Common myeloid progenitor, CD34-positive (primary cell): ENCODE measurements at regions of chr9 and their contacts with region 1.

Region 1: DNA sequence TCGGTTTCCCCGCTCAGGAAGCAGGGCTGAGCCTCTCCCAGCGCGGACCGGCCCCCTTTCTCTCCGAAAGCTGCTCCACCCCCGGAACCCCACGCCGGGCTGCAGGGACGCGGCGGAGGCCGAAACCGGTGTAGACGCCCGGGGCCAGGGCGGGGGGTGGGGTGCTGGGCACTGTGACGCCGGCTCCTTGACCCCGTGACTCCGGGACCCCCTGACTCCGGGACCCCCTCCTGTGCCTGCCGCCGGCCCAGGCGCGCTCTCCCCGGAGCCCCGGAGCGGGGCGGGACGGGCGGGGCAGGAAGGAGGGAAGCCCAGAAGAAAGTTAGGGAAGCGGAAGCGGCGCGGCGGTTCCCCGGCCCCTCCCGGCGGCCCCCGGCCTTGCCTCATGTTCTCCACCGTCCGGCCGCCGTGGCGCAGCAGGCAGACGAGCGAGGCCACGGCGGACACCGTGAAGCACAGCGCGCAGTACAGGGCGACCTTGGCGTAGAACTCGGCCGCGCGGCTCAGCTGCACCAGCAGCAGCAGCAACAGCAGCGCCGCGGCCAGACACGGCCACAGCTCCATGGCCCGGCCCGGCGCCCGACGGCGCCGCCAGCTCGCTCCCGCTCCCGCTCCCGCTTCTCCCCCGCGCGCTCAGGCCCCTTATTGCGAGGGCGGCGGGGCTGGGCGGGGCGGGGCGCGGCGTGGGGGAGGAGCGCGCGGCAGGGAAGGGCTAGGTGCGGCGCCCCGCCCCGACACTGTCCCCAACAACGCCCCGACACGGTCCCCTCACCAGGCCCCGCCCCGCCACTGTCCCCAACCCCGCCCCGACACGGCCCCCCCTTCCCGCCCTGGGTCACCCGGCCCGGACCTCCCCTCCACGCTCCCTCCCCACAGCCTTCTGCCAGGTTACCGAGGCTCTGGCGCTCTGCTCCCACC is at the start of gene AGPAT2:
- DNase-seq: peak; percentile 65 to 76 (median 73)
- H3K4me3 ChIP-seq: peak within 1 kb of the TSS; percentile 48 to 85 (median 78)
- H3K27ac ChIP-seq: peak within 1 kb of the TSS in 1 of 2 experiments; percentile 71
- H3K4me1 ChIP-seq: peaks cover 0 to 40% (median 31%) of the 10 kb centered on the region in 4 experiments
- H3K27me3 ChIP-seq: no peaks in the 10 kb centered on the region

Region 2: DNA sequence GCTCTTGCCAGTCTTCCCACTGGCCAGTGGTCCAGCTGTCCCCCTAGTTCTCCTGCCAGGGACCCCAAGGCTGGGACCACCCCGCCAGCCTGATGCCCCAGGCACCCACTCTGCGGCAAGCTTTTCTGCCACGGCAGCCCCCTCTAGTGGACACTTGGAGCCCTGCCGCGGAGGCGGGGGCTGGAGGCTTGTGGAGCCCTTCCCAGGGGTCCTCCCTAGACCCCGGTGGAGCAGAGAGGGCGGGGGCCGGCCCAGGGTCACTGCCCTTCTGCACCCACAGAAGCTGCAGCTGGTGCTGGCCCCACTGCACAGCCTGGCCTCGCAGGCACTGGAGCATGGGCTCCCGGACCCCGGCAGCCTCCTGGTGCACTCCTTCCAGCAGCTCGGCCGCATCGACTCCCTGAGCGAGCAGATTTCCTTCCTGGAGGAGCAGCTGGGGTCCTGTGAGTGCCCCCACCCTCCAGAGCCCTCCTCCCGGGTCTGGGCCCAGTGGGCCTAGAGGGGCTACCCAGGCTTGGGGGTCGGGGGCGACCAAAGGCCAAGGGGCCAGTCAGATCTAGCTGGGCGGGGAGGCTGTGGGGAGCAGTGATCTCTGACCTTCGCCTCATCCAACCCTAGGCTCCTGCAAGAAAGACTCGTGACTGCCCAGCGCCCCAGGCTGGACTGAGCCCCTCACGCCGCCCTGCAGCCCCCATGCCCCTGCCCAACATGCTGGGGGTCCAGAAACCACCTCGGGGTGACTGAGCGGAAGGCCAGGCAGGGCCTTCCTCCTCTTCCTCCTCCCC is 15.2 kb before region 1 on chr9:
- CTCF ChIA-PET with region 1: interaction called, 44 read pairs
- POLR2A ChIA-PET with region 1: interaction called, 10 read pairs
- DNase-seq: peak in 2 of 3 donors; percentile 60 to 65
- H3K4me3 ChIP-seq: no peak overlapping the region
- H3K27ac ChIP-seq: no peak overlapping the region
- H3K4me1 ChIP-seq: peaks cover 0 to 59% (median 44%) of the 10 kb centered on the region in 4 experiments
- H3K27me3 ChIP-seq: no peaks in the 10 kb centered on the region